ENCODE measurements at regions of chr16 and their contacts with region 1.

Region 1: DNA sequence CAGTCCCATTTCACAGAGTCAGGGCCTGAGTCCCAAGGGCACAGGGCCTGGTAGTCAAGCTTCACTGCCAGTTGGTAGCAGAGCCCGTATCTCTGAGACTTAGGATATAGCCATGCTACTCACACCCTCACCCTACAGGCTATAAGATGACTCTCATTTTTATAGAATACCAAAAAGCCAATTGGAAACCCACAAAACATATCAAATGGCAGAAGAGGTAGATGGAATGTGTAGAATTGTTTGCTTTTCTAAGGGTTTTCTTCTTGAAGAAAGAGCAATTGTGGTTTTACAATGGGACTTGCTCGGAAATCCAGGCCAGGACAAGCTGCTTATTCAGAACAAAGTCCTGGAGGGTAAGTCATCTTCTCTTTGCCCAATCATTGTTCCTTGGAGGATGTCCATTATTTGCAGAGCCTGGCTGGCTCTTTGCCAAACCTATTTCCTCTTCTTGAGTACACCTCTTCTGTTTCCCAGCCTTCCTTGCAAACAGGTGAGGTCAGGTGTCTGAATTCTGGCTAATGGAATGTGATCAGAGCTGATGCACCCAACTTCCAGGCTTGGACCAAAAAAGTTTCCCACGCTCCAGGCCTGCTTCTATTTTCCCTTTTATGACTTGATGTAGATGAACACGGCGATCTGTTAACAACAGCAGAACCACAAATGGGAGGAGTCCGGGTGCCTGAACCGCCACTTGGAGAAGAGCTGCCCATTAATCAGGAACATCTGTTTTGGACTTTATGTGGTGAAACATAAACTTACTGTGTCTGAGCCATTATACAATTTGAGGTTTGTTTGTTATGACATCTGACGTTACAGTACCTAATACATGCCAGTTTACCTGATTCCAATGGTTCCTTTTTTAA is 16.9 kb upstream of the CCL22 start:
- DNase-seq: no peak
- ATAC-seq: no peak
- H3K4me3 Mint-ChIP-seq: peak overlapping the region; percentile 67
- H3K27ac Mint-ChIP-seq: peak overlapping the region; percentile 24
- H3K4me1 Mint-ChIP-seq: peaks cover 49% of the 10 kb centered on the region
- H3K27me3 Mint-ChIP-seq: peaks cover 9% of the 10 kb centered on the region
- CTCF ChIP-seq: no peak

Region 2: DNA sequence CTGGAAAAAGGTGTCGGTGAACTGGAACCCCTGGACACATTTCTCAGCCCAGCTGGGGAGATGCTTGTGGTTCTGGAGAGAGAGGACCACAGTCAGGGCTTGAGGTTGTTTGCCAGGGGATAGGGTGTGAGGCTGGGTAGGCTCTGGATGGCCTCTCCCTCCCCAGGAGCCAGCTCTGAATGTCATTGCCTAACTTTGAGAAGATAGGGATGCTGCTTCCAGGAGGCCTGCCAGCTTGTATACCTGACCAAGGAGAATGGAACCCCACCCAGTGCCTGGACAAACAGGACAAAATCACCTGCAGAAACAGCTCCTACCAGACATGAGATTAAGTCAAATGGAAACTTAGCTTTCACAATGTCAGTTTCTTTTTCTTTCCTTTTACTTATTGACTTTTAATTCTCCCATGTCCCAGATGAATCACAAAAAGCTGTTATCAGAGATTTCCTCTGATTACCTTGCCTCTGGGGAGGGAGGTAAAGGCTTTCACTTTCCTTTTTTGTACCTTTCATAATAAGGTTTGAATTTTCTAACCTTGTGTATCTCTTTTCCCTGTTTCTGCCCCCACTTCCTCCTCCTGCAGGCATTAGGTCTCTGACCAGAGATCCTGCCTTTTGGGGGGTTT is 27.4 kb before region 1 on chr16:
- CTCF ChIA-PET with region 1: no interaction called
- POLR2A ChIA-PET with region 1: no interaction called
- intact Hi-C with region 1: no loop called
- DNase-seq: no peak
- ATAC-seq: no peak
- H3K4me3 Mint-ChIP-seq: no peak overlapping the region
- H3K27ac Mint-ChIP-seq: no peak overlapping the region
- H3K4me1 Mint-ChIP-seq: peaks cover 9% of the 10 kb centered on the region
- H3K27me3 Mint-ChIP-seq: peaks cover 5% of the 10 kb centered on the region
- CTCF ChIP-seq: no peak

Region 3: GRCh38 chr16:57325458-57325857 is 16.2 kb before region 1 on chr16:
- CTCF ChIA-PET with region 1: no interaction called
- POLR2A ChIA-PET with region 1: no interaction called
- intact Hi-C with region 1: loop called (anchors 1 kb)
- DNase-seq: no peak
- ATAC-seq: no peak
- H3K4me3 Mint-ChIP-seq: no peak overlapping the region
- H3K27ac Mint-ChIP-seq: peak overlapping the region; percentile 38
- H3K4me1 Mint-ChIP-seq: peaks cover 12% of the 10 kb centered on the region
- H3K27me3 Mint-ChIP-seq: no peaks in the 10 kb centered on the region
- CTCF ChIP-seq: no peak

Region 4: DNA sequence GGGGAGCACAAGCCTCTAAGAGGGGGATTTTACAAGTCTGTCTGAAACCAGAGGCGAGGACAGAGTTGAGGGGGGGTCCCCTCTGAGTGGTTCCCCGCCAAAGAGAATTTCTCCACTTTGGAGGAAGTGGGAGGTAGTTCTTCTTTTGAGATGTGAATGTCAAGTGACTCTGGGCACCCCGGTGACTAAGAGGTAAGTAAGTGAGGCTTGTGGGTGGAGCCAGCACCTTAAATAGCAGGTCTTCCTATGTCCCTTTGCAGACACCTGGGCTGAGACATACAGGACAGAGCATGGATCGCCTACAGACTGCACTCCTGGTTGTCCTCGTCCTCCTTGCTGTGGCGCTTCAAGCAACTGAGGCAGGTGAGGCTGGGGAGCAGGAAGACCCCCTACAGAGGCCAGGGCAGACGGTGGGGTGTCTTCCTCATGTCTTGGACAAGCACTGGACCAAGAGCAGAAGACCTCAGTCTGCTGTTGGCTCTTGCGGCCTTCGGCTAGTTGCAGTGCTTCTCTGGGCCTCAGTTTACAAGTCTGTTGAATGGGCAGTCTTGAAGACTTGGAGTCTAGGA is 16.9 kb after region 1 on chr16 and contains the start of gene CCL22:
- CTCF ChIA-PET with region 1: no interaction called
- POLR2A ChIA-PET with region 1: interaction called, 7 read pairs
- intact Hi-C with region 1: loop called (anchors 1 kb)
- DNase-seq: peak; percentile 36
- ATAC-seq: peak; percentile 84
- H3K4me3 Mint-ChIP-seq: peak within 1 kb of the TSS; percentile 85
- H3K27ac Mint-ChIP-seq: peak within 1 kb of the TSS; percentile 82
- H3K4me1 Mint-ChIP-seq: peaks cover 32% of the 10 kb centered on the region
- H3K27me3 Mint-ChIP-seq: no peaks in the 10 kb centered on the region
- CTCF ChIP-seq: no peak
- total RNA-seq, gene CCL22: 276 and 288 TPM in 2 replicates

Region 5: DNA sequence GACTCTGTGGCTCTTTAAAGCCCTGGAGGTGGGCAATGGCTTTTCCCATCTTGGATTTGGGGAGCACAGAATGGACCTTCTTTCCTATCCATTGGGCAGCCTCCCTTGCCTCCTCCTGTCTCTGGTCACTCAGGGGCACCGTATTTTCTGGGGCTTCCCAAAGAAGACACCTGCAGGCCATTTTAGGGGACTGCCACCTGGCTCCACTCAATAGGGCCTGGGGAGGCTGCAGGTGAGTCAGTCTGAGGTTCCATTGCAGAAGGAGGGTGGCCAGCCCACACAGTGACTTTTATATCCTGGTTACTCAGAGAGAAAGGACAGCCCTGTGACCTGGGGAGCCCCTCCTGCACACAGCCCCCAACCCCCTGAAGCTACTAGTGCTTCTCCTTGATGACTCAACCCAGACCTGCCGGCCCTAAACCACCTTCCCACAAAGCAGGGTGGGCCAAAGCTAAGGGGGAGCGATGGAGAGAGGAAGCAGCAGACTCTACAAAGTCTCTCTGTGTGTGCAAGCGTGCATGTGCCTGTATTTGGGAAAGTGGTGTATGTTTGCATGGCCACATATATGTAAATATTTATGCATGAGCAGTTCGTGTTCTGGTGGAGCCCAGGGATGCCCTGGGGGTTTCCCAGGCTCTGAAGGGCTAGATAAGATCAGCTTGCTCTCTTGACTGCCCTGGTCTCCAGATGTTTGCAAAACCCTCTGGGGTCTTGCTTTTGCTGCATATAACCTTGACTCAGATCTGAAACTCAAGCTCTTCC is 35.6 kb after region 1 on chr16:
- CTCF ChIA-PET with region 1: no interaction called
- POLR2A ChIA-PET with region 1: interaction called, 12 read pairs
- intact Hi-C with region 1: loop called (anchors 1 kb)
- DNase-seq: peak; percentile 46
- ATAC-seq: peak; percentile 82
- H3K4me3 Mint-ChIP-seq: peak overlapping the region; percentile 29
- H3K27ac Mint-ChIP-seq: peak overlapping the region; percentile 86
- H3K4me1 Mint-ChIP-seq: peaks cover 43% of the 10 kb centered on the region
- H3K27me3 Mint-ChIP-seq: no peaks in the 10 kb centered on the region
- CTCF ChIP-seq: no peak

Region 6: DNA sequence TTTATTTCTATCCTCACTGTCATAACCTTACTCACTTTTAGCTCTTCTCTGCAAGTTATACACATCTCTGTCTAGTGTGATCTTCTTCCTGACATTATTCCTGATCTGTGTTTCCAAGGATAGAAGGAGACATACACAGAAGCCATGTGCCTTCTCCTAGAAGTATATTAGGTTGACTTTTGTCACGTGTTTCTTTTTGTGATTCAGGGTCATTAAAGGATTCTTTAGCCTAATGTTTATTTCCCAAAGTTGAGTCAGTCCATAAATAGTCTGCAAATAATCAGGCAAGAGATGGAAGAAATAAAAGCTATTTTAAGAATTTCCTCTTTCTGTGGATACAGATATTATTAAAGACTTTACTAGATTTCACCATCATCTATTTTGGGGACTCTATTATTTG is 1606.6 kb after region 1 on chr16:
- CTCF ChIA-PET with region 1: no interaction called
- POLR2A ChIA-PET with region 1: no interaction called
- intact Hi-C with region 1: no loop called
- DNase-seq: no peak
- ATAC-seq: no peak
- H3K4me3 Mint-ChIP-seq: no peak overlapping the region
- H3K27ac Mint-ChIP-seq: no peak overlapping the region
- H3K4me1 Mint-ChIP-seq: no peaks in the 10 kb centered on the region
- H3K27me3 Mint-ChIP-seq: no peaks in the 10 kb centered on the region
- CTCF ChIP-seq: no peak